ENCODE measurements at regions of chr7 and their contacts with region 1.

Region 1: GRCh38 chr7:7920481-7920880 is 48.1 kb upstream of the GLCCI1 start:
- DNase-seq: peak; percentile 46
- H3K4me3 Mint-ChIP-seq: no peak overlapping the region
- H3K27ac Mint-ChIP-seq: no peak overlapping the region
- H3K4me1 Mint-ChIP-seq: peaks cover 24% of the 10 kb centered on the region
- H3K27me3 Mint-ChIP-seq: no peaks in the 10 kb centered on the region

Region 2: DNA sequence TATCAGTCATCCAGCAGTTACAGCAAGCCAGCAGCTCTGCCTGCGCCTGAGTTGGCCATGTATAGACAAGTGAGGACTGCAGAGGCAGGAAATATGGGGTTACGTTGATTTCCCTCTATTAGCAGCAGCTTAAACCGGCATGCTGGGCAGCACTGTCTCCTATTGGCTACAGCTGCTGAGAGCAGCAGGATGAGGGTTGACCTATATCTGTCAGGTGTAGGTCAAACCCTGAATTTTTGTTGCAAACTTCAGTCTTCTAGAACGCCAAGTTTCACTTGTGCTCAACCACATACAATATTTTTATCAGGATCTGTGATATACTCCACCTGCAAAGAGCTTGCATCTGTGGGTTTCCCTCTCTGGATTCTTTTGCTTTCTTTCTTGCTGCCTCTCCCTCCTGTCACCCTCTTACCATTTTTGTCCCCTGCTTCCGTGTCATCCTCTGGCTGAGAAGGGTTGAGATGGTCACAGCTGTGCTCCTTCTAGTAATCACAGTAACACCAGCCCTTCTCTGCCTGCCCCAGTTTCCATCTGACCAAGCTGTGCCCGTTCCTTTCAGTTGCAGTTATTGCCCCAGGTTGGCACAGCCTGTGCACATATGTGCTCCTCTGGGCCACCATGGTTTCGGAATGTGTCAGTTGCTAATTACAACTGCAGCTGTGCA is 24.3 kb after region 1 on chr7:
- CTCF ChIA-PET with region 1: no interaction called
- intact Hi-C with region 1: loop called (anchors 1 kb)
- DNase-seq: peak; percentile 75
- H3K4me3 Mint-ChIP-seq: peak overlapping the region; percentile 41
- H3K27ac Mint-ChIP-seq: peak overlapping the region; percentile 18
- H3K4me1 Mint-ChIP-seq: peaks cover 16% of the 10 kb centered on the region
- H3K27me3 Mint-ChIP-seq: no peaks in the 10 kb centered on the region

Region 3: DNA sequence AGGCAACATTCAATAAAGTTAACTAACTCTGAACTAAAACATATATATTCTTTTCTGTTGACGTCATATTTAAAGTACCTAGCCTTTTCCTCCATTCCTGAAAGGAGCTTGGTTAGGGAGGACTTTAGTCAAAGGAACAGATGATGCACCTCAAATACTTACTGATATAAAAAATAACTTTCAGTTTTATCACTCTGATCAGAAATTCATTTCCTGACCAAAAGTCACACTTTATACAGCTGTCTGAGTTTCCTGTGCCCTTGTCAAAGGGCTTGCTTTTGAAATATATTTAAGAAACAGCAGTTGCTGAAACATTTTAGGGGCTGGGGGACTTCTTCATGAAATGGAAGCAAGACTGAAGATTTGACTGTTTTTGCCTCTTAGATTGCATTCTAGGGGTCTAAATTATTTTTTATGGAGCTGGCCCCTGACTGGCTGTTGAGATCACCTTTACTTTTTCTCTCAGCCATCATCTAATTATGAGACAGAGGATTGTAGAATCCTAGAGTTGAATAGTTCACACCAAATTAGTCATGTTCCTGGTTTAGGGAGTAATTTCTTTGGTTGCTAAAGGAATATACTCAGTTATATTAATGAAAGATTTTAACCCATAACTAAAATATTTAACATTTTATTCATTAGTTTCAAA is 94.7 kb after region 1 on chr7:
- CTCF ChIA-PET with region 1: no interaction called
- intact Hi-C with region 1: loop called (anchors 1 kb)
- DNase-seq: no peak
- H3K4me3 Mint-ChIP-seq: peak overlapping the region; percentile 4
- H3K27ac Mint-ChIP-seq: peak overlapping the region; percentile 68
- H3K4me1 Mint-ChIP-seq: peaks cover 47% of the 10 kb centered on the region
- H3K27me3 Mint-ChIP-seq: no peaks in the 10 kb centered on the region

Measured in activated naive CD4-positive, alpha-beta T cell treated with anti-CD3 and anti-CD28 coated beads for 36 hours (primary cell).